ENCODE measurements at regions of chr19 and their contacts with region 1.

Region 1: DNA sequence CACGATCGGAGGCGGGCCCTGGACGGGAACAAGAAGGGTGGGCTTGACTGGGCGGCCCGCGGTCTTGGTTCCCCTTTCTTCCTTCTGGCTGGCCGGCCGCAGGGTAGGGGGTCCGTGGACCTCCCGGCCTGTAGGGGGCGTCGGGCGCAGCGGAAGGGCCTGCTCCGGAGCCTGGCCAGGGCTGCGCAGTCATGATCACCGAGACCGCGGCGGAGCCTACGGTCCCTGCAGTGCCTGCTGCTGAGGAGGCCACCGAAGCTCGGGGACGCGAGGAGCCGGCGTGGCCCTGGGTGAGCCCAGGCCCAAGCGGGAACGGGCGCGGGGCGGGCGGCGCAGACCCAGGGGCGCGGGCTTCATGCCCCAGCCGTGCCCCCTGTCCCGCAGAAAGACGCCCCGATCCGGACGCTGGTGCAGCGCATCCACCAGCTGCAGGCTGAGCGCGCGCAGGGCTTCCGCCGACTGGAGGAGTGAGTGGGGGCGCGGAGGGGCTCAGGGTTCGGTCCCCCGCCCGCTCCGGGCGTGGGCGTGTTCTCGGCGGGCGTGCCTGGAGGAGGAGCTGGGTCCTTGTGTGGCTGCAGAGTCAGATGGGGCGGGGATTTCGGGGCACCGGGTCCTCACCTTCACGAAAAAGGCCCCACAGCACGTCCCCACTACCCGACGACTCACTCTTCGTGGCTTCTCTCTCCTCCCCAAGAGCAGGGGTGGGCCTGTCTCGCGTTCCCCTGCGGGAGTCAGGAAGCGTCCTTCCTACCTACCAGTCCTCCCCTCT is at the start of gene REX1BD:
- DNase-seq: peak in 1 of 2 donors; percentile 90
- H3K4me3 ChIP-seq: peak within 1 kb of the TSS; percentile 83 to 87
- H3K27ac ChIP-seq: peak within 1 kb of the TSS; percentile 81
- H3K4me1 ChIP-seq: peaks cover 6 to 12% of the 10 kb centered on the region in 2 donors
- H3K27me3 ChIP-seq: no peaks in the 10 kb centered on the region
- CTCF ChIP-seq: peak; percentile 85 to 86 (median 86)
- total RNA-seq, gene REX1BD: 173 TPM

Region 2: DNA sequence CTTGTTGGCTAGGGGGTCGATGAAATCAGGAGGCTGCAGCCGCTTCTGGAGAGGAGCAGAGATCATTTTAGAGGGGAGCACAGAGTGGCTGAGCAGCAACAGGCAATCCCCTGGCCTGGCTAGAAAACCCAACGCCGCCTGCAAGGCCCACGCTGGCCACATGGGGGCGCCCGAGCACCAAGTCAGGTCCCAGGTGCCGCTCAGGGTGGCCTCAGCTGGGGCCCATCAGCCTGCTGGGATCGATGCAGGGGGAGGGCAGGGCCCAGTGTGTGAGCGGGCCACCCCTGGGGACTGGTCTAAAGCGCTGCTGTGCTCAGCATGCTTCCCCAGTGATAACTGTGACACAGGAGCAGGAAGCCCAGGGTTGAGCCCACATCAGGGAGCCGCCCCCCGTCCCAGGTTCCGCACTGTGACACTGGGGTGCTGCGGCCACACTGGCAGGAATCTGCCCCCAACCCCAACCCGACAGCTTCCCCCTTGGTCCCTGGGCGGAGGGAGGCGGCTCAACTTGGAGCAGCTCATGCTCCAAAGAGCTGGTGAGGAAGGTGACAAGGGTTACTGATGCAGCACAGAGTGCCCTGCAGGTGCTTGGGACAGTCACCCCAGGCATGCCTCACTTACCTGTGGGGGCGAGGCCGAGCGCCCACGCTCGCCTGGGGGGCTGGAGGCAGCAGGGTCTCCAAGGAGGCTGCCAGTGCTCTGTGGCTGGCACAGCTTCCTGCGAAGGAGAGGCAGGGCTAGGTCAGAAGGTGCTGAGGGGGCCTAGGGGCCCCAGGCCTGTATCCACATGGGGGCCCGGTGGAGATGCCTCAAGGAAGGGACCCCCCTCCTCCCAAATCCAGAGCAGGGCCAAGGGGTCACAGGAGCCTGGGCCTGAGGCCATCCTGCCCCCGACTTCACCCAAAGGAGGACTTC is 137.6 kb before region 1 on chr19:
- intact Hi-C with region 1: loop called (anchors 2 kb)
- DNase-seq: peak in 1 of 2 donors; percentile 93
- H3K4me3 ChIP-seq: no peak overlapping the region
- H3K27ac ChIP-seq: peak overlapping the region in 1 of 2 donors; percentile 22
- H3K4me1 ChIP-seq: peaks cover 3 to 7% of the 10 kb centered on the region in 2 donors
- H3K27me3 ChIP-seq: no peaks in the 10 kb centered on the region
- CTCF ChIP-seq: peak; percentile 95 to 99 (median 95)

Region 3: DNA sequence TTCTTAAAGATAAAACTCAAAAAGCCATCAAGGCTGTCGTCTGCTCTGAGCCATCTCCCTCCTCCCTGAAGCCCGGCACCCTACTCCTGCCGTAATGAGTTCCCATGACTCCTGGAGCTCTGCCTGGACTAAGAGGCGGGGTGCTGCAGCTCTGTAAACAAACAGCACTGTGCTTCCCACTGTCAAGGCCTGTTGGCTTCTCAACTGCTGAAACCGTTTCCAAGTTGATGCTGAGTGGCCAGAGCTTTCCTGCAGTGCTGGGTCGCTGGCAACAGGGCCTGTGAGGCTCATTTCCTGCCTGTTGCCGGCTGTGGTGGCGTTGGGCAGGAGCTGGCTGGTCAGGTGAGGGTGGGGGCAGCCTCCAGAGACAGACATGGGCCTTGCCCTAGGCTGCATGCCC is 124.1 kb before region 1 on chr19:
- intact Hi-C with region 1: no loop called
- DNase-seq: peak; percentile 71 to 93
- H3K4me3 ChIP-seq: no peak overlapping the region
- H3K27ac ChIP-seq: peak overlapping the region; percentile 89 to 94
- H3K4me1 ChIP-seq: peaks cover 23 to 67% of the 10 kb centered on the region in 2 donors
- H3K27me3 ChIP-seq: no peaks in the 10 kb centered on the region
- CTCF ChIP-seq: no peak

Region 4: GRCh38 chr19:18636183-18636968 is 47.6 kb after region 1 on chr19:
- intact Hi-C with region 1: loop called (anchors 5 kb)
- DNase-seq: peak; percentile 89 to 99
- H3K4me3 ChIP-seq: peak overlapping the region; percentile 85 to 95
- H3K27ac ChIP-seq: peak overlapping the region; percentile 88 to 94
- H3K4me1 ChIP-seq: peaks cover 7 to 9% of the 10 kb centered on the region in 2 donors
- H3K27me3 ChIP-seq: no peaks in the 10 kb centered on the region
- CTCF ChIP-seq: no peak

Region 5: DNA sequence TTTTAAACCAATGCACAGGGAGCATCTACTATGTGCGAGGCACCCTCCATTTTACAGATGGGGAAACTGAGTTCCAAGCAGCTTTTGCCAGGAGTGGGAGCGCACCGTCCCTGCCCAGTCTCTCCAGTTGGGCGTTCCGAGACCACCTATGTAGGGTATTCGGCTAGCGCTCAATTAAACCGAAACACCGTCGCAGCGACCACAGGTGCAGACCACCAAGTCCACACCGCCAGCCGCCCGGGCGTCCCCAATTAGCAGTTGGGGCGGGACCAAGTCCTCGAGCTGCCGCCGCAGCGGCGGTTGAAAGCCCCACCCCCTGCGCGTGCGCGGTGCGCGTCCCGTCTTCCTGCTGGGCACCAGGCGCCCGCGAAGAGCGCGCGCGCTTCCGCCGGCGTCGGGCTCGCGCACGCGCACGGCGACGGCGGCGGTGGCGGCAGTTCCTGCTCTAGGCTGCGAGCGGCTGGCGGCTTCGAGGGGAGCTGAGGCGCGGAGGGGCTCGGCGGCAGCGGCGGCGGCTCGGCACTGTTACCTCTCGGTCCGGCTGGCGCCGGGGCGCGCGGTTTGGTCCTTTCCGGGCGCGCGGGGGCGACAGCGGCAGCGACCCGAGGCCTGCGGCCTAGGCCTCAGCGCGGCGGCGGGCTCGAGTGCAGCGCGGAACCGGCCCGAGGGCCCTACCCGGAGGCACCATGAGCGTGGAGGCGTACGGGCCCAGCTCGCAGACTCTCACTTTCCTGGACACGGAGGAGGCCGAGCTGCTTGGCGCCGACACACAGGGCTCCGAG is 242.9 kb after region 1 on chr19 and contains the start of gene UPF1:
- intact Hi-C with region 1: loop called (anchors 5 kb)
- DNase-seq: peak; percentile 27 to 94
- H3K4me3 ChIP-seq: peak within 1 kb of the TSS; percentile 95
- H3K27ac ChIP-seq: peak within 1 kb of the TSS; percentile 71 to 82
- H3K4me1 ChIP-seq: peaks cover 10 to 24% of the 10 kb centered on the region in 2 donors
- H3K27me3 ChIP-seq: no peaks in the 10 kb centered on the region
- CTCF ChIP-seq: no peak
- total RNA-seq, gene UPF1: 225 TPM

Region 6: DNA sequence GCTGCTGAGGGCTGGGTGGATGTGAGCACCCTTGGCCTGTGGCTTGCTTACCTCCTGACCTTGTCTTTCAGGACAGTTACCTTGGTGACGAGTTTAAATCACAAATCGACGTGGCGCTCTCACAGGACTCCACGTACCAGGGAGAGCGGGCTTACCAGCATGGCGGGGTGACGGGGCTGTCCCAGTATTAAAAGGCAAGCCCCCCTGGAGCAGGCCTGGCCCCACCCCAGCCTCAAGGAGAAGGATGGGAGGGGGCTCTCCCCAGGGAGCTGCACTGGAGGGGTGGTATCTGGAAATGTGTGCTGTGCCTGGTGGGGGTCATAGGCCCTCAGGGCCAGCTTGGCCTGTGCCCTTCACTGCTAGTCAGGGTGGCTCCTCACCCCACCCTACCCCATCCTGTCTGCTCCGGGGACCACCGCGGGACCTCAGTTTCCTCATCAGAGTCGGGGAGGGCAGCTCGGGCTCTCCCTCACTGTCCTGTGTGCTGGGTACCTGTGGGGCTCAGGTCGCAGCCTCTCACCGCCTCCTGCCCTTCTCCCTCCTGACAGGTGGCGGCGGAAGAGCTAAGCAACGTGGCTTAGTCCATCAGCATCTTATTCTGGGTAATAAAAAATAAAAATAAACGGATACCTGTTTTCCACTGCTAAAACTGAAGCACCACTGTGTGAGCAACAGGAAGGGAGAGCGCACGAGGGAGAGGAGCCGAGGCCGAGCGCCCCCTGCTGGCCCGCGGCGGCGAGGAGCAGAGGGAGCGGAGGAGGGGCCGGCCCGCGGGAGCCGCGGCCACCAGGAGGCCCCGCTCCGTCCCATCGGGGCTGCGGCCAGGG is 277.4 kb after region 1 on chr19:
- intact Hi-C with region 1: loop called (anchors 5 kb)
- DNase-seq: no peak
- H3K4me3 ChIP-seq: no peak overlapping the region
- H3K27ac ChIP-seq: no peak overlapping the region
- H3K4me1 ChIP-seq: peaks cover 0 to 7% of the 10 kb centered on the region in 2 donors
- H3K27me3 ChIP-seq: no peaks in the 10 kb centered on the region
- CTCF ChIP-seq: peak; percentile 90 to 91 (median 91)

Measured in ascending aorta (tissue), 2 donors.